ENCODE measurements at regions of chr21 and their contacts with region 1.

Region 1: GRCh38 chr21:43034098-43034497 is 41.5 kb downstream of the CBS start:
- DNase-seq: no peak
- ATAC-seq: no peak
- H3K4me3 ChIP-seq: no peak overlapping the region
- H3K27ac ChIP-seq: no peak overlapping the region
- H3K4me1 ChIP-seq: no peaks in the 10 kb centered on the region
- H3K27me3 ChIP-seq: no peaks in the 10 kb centered on the region
- CTCF ChIP-seq: no peak

Region 2: GRCh38 chr21:42861311-42861847 is 172.7 kb before region 1 on chr21:
- CTCF ChIA-PET with region 1: no interaction called
- POLR2A ChIA-PET with region 1: no interaction called
- in situ Hi-C with region 1: no loop called
- intact Hi-C with region 1: no loop called
- DNase-seq: no peak
- ATAC-seq: no peak
- H3K4me3 ChIP-seq: no peak overlapping the region
- H3K27ac ChIP-seq: no peak overlapping the region
- H3K4me1 ChIP-seq: no peaks in the 10 kb centered on the region
- H3K27me3 ChIP-seq: no peaks in the 10 kb centered on the region
- CTCF ChIP-seq: no peak

Region 3: GRCh38 chr21:42939582-42940410 is 94.3 kb before region 1 on chr21:
- CTCF ChIA-PET with region 1: no interaction called
- POLR2A ChIA-PET with region 1: interaction called, 13 read pairs
- in situ Hi-C with region 1: no loop called
- intact Hi-C with region 1: no loop called
- DNase-seq: peak; percentile 67
- ATAC-seq: peak; percentile 94
- H3K4me3 ChIP-seq: peak overlapping the region in 1 of 2 experiments; percentile 14; a peak in 1 of 4 replicates
- H3K27ac ChIP-seq: peak overlapping the region; percentile 29; the same call in 1 of the 2 replicates
- H3K4me1 ChIP-seq: 0 out of 2 replicates have a peak, but pooled peaks cover 9% of the 10 kb centered on the region
- H3K27me3 ChIP-seq: no peaks in the 10 kb centered on the region
- CTCF ChIP-seq: no peak